CD8-positive, alpha-beta memory T cell (primary cell): ENCODE measurements at regions of chr11 and their contacts with region 1.

Region 1: GRCh38 chr11:9460322-9461067 is at the start of gene ZNF143:
- DNase-seq: peak; percentile 99 to 100 (median 100)
- H3K4me3 ChIP-seq: peak within 1 kb of the TSS; percentile 88
- H3K4me3 Mint-ChIP-seq: peak within 1 kb of the TSS; percentile 90 to 95 (median 93)
- H3K27ac ChIP-seq: peak within 1 kb of the TSS; percentile 99
- H3K27ac Mint-ChIP-seq: peak within 1 kb of the TSS; percentile 96 to 99 (median 98)
- H3K4me1 ChIP-seq: peaks cover 25% of the 10 kb centered on the region
- H3K4me1 Mint-ChIP-seq: peaks cover 30 to 38% (median 36%) of the 10 kb centered on the region in 3 donors
- H3K27me3 ChIP-seq: no peaks in the 10 kb centered on the region
- H3K27me3 Mint-ChIP-seq: no peaks in the 10 kb centered on the region
- total RNA-seq, gene ZNF143: 33.0 to 39.8 TPM

Region 2: GRCh38 chr11:8964324-8965320 is 495.9 kb before region 1 on chr11 and contains the start of gene TMEM9B:
- CTCF ChIA-PET with region 1: interaction called, 5 read pairs
- POLR2A ChIA-PET with region 1: interaction called, 13 read pairs
- DNase-seq: peak; percentile 66 to 84 (median 79)
- H3K4me3 ChIP-seq: peak within 1 kb of the TSS; percentile 87
- H3K4me3 Mint-ChIP-seq: peak within 1 kb of the TSS; percentile 94 to 97 (median 97)
- H3K27ac ChIP-seq: peak within 1 kb of the TSS; percentile 94
- H3K27ac Mint-ChIP-seq: peak within 1 kb of the TSS; percentile 91 to 99 (median 97)
- H3K4me1 ChIP-seq: peaks cover 24% of the 10 kb centered on the region
- H3K4me1 Mint-ChIP-seq: peaks cover 32 to 44% (median 33%) of the 10 kb centered on the region in 3 donors
- H3K27me3 ChIP-seq: no peaks in the 10 kb centered on the region
- H3K27me3 Mint-ChIP-seq: no peaks in the 10 kb centered on the region
- total RNA-seq, gene TMEM9B: 31.3 to 32.7 TPM

Region 3: DNA sequence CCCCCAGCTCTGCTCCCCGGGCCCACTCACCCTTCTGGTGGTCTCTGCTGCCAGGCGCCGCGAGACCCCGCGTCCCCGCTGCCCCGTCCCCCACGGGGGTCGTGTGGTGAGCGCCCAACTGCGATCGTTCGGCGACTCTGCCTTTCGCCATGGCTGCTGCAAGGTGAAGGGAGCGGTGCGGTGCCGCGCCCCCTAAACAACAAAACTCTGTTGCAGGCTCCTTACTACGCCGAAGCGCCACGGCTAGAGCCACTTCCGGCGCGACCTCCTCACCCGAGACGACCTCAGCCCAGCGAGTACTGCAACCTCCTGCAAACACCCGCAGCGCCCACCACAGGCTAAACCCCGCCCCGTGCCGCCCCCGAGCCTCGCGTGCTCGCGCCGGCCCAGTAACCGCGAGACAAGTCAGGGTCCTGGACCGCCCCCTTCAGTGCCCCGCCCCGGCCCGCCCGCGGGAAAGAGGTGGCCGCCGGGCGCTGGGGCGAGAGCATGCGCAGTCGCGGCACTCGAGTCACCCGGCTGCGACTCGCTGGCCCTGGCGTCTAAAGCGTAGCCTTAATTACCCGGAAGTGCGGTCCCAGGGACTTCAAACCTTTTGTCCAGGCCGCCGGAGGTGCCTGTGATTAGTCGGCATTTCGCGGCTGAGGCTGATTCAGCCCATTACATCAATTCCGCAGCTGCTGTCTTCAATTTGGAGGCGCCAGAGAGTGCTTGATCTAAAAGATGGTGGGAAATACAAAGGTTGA is 146.0 kb before region 1 on chr11 and contains the start of gene TMEM41B:
- CTCF ChIA-PET with region 1: interaction called, 4 read pairs
- POLR2A ChIA-PET with region 1: interaction called, 23 read pairs
- DNase-seq: peak; percentile 99 to 100 (median 100)
- H3K4me3 ChIP-seq: peak within 1 kb of the TSS; percentile 89
- H3K4me3 Mint-ChIP-seq: peak within 1 kb of the TSS; percentile 96 to 100 (median 99)
- H3K27ac ChIP-seq: peak within 1 kb of the TSS; percentile 94
- H3K27ac Mint-ChIP-seq: peak within 1 kb of the TSS; percentile 86 to 100 (median 98)
- H3K4me1 ChIP-seq: peaks cover 16% of the 10 kb centered on the region
- H3K4me1 Mint-ChIP-seq: peaks cover 33 to 50% (median 40%) of the 10 kb centered on the region in 3 donors
- H3K27me3 ChIP-seq: no peaks in the 10 kb centered on the region
- H3K27me3 Mint-ChIP-seq: peaks cover 8 to 20% of the 10 kb centered on the region in 2 donors
- total RNA-seq, gene TMEM41B: 21.1 to 24.9 TPM

Region 4: DNA sequence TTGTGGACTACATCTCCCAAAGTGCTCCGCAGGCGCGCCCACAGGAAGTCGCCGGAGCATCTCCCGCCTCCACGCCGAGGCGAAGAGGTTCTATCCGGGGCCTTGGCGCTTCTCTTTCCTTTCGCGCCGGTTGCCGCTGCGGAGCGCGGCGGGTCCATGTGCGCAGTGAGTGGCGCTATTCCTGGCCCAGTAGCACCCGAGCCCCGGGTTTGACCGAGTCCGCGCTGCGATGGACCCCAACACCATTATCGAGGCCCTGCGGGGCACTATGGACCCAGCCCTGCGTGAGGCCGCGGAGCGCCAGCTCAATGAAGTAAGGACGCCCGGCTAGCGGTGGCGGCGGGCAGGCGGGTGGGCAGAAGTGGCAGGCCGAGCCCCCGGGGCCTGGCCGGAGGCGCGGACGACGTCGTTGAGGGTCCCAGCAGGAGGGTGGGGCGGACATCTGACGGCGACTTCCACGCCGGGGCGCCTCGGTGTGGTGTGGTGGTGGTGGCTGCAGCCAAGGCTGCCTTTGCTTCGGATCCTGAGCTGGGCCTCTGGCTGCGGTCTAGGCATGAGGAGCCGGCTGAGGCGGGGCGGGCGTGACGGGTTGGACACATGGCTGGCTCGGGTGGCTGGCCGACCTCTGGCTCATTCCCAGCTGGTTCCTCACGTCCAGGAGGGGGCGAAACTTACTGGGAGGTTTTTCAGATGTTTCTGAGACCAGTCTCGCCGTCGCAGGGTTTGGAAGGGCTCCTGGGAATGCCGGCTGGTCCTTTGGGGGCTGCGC is 75.8 kb before region 1 on chr11 and contains the start of gene IPO7:
- CTCF ChIA-PET with region 1: interaction called, 4 read pairs
- POLR2A ChIA-PET with region 1: interaction called, 21 read pairs
- DNase-seq: peak; percentile 76 to 92 (median 82)
- H3K4me3 ChIP-seq: peak within 1 kb of the TSS; percentile 94
- H3K4me3 Mint-ChIP-seq: peak within 1 kb of the TSS; percentile 92 to 98 (median 96)
- H3K27ac ChIP-seq: peak within 1 kb of the TSS; percentile 92
- H3K27ac Mint-ChIP-seq: peak within 1 kb of the TSS; percentile 73 to 98 (median 94)
- H3K4me1 ChIP-seq: peaks cover 27% of the 10 kb centered on the region
- H3K4me1 Mint-ChIP-seq: peaks cover 39 to 46% (median 41%) of the 10 kb centered on the region in 3 donors
- H3K27me3 ChIP-seq: no peaks in the 10 kb centered on the region
- H3K27me3 Mint-ChIP-seq: no peaks in the 10 kb centered on the region
- total RNA-seq, gene IPO7: 150 to 169 TPM

Region 5: DNA sequence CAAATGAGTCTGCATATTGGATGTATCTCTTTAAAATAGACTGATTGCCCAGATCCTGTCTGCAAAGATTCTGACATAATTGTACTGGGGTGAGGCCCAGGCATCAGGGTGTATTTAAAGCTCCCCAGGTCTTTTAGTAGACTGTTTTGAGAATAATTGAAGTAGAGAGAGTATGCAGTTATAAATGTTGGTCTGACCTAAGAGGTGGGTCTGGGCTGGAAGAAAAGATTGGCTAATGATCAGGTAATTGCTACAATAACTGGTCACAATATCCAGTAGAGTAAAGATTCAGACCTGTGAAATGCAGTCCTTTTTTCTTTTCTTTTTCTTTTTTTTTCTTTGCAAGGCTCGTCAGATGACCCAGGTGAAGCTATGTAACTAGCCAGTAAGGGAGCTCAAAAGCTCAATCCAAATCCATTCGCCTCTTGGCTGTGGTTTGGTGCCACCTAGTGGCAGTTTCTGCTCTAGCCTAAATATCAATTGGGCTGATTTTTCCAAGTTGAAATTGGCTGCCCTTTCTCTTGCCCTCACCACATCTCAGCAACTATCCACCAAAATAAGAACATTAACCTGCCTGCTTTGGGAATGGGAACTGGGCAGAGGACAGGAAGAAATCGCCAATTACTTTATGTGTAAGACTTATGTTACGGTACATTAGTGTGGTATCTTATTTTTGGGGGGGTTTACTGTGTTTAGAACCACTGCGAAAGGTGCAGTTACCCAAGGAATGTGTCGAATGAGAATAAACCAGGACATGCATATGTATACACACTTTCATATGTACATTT is 46.2 kb after region 1 on chr11:
- CTCF ChIA-PET with region 1: interaction called, 11 read pairs
- POLR2A ChIA-PET with region 1: interaction called, 4 read pairs
- DNase-seq: peak; percentile 52 to 82 (median 64)
- H3K4me3 ChIP-seq: no peak overlapping the region
- H3K4me3 Mint-ChIP-seq: no peak overlapping the region
- H3K27ac ChIP-seq: no peak overlapping the region
- H3K27ac Mint-ChIP-seq: peak overlapping the region in 3 of 8 donors; percentile 13 to 66 (median 43)
- H3K4me1 ChIP-seq: no peaks in the 10 kb centered on the region
- H3K4me1 Mint-ChIP-seq: peaks cover 11 to 19% (median 16%) of the 10 kb centered on the region in 3 donors
- H3K27me3 ChIP-seq: no peaks in the 10 kb centered on the region
- H3K27me3 Mint-ChIP-seq: no peaks in the 10 kb centered on the region

Region 6: DNA sequence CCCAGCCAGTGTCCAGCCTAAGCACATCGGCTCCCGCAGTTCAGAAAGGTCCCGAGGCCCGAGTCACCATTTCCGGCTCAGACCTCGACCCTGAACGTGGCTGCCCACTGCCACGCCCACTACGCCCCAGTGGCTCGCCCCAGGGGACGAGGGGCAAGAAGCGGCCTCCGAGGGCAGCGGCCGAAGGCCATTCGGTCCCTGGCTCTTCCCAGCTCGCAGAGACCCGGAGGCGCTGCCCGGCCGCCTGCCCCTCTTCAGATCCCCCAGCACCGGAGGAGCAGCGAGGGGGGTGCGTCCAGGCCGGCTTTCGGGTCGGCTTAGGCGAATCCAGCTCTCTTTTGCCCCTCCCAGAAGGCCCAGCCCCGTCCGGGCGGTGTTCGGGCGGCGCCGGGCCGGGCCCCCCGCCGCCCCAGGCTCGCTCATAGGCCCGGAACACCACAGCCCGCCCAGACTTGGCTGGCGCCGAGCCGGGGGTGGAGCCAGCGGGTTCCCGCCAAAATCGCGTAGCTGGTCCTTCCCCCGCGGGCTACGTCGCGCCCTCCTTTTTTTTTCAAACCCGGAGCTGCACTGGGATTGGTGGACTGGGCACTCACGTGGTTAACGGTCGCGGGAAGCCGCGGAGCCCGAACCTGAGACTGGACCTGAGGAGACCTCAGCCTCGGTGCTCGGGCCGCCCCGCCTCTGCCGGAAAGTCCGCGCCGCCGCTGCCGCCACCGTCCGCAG is 112.7 kb after region 1 on chr11 and contains the start of gene WEE1:
- CTCF ChIA-PET with region 1: interaction called, 3 read pairs
- POLR2A ChIA-PET with region 1: interaction called, 12 read pairs
- DNase-seq: peak; percentile 89 to 97 (median 94)
- H3K4me3 ChIP-seq: peak within 1 kb of the TSS; percentile 76
- H3K4me3 Mint-ChIP-seq: peak within 1 kb of the TSS; percentile 84 to 96 (median 86)
- H3K27ac ChIP-seq: peak within 1 kb of the TSS; percentile 82
- H3K27ac Mint-ChIP-seq: peak within 1 kb of the TSS; percentile 3 to 97 (median 89)
- H3K4me1 ChIP-seq: peaks cover 5% of the 10 kb centered on the region
- H3K4me1 Mint-ChIP-seq: peaks cover 32 to 45% (median 43%) of the 10 kb centered on the region in 3 donors
- H3K27me3 ChIP-seq: no peaks in the 10 kb centered on the region
- H3K27me3 Mint-ChIP-seq: no peaks in the 10 kb centered on the region
- total RNA-seq, gene WEE1: 46.9 to 49.8 TPM